GM12878 (cell line): ENCODE measurements at regions of chr15 and their contacts with region 1.

Region 1: DNA sequence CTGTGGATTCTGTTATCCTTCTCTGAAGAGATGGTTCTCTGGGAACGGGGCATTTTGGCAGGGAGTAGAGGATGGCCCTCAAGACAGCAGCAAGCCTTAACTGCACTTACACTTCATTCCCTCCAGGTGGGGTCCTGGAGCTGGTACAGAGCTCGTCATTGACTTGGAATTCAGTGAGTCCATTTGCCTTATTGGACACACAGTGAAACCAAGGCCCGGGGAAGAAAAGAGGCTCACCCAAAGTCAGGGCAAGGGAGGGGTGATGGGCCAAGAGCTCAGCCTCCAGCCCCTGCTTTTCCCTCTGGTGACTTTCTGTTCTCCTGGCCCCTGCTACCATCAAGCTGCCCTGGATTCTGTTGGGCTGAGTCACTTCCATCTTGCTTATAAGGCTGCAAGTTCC is 125.6 kb downstream of the ETFA start:
- DNase-seq: no peak
- ATAC-seq: peak; percentile 61
- H3K4me3 ChIP-seq: no peak overlapping the region
- H3K27ac ChIP-seq: no peak overlapping the region
- H3K4me1 ChIP-seq: peaks cover 18% of the 10 kb centered on the region
- H3K27me3 ChIP-seq: peaks cover 0 to 1% of the 10 kb centered on the region in 2 experiments; a peak in 2 of 4 replicates
- CTCF ChIP-seq: peak; percentile 56 to 70 (median 59)
- EP300 ChIP-seq: no peak
- POLR2A ChIP-seq: no peak
- RAD21 ChIP-seq: peak; percentile 51; the same call in 1 of the 2 replicates

Region 2: DNA sequence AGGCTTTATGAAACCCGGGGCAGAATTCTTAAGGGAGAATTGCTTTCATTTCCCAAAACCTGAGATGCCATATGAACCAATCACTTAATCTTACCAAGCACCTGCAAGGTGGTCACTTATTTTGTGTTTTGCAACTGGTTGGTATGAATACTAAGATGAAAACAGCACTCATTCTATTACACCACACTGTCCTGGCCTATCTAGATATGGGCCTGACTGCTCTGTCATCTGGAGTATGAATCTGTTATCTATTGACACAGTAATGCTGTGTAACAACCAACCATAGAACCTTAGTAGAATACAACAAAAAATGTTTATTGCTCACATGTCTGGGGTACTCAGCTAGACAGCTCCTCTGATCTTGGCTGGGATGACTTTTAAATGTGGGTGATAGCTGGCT is 51.2 kb before region 1 on chr15:
- CTCF ChIA-PET with region 1: no interaction called
- POLR2A ChIA-PET with region 1: no interaction called
- RAD21 ChIA-PET with region 1: no interaction called
- SMC1A ChIA-PET with region 1: no interaction called
- in situ Hi-C with region 1: no loop called
- intact Hi-C with region 1: no loop called
- DNase-seq: no peak
- ATAC-seq: no peak; the same call in 2 of the 3 replicates
- H3K4me3 ChIP-seq: no peak overlapping the region
- H3K27ac ChIP-seq: no peak overlapping the region
- H3K4me1 ChIP-seq: no peaks in the 10 kb centered on the region
- H3K27me3 ChIP-seq: no peaks in the 10 kb centered on the region
- CTCF ChIP-seq: no peak
- EP300 ChIP-seq: no peak
- POLR2A ChIP-seq: no peak
- RAD21 ChIP-seq: no peak

Region 3: GRCh38 chr15:76336254-76337058 is 150.7 kb after region 1 on chr15 and contains the start of gene ISL2:
- CTCF ChIA-PET with region 1: interaction called, 11 read pairs
- POLR2A ChIA-PET with region 1: no interaction called
- RAD21 ChIA-PET with region 1: interaction called, 4 read pairs
- SMC1A ChIA-PET with region 1: interaction called, 3 read pairs
- in situ Hi-C with region 1: no loop called
- intact Hi-C with region 1: loop called (anchors 5 kb)
- DNase-seq: peak; percentile 61
- ATAC-seq: peak; percentile 30
- H3K4me3 ChIP-seq: peak within 1 kb of the TSS; percentile 62
- H3K27ac ChIP-seq: peak within 1 kb of the TSS; percentile 51
- H3K4me1 ChIP-seq: peaks cover 25% of the 10 kb centered on the region
- H3K27me3 ChIP-seq: peaks cover 11 to 22% of the 10 kb centered on the region in 2 experiments
- CTCF ChIP-seq: no peak
- EP300 ChIP-seq: no peak
- POLR2A ChIP-seq: peak; percentile 88
- RAD21 ChIP-seq: no peak
- polyA plus RNA-seq, gene ISL2: not detected

Region 4: DNA sequence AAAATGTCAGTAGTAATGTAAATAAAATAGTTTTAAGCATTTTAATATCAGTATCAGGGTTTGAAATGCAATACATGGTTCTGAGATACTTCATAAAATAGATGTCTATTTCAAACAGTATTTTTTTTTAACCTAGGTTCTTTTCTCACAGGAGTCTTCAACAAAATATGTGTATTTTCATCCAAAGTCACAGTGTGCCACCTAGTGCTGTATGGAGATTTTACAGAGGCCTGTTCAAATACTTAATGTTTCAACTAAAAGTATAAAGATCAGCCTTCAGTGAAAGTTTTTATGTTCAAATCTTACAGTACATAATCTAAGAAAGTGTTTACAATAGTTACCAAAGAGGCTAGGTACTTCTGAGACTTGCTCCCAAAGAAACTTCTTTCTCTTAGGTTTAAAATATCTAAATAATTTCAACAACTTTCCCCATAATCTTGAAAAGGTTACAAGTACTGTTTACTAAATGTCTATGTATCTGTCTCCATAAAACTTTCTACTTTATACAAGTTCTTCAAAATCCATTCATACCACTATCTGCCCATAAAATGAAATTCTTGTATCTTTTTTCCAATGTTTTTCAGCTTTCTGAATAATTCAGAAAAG is 681.1 kb after region 1 on chr15:
- CTCF ChIA-PET with region 1: interaction called, 18 read pairs
- POLR2A ChIA-PET with region 1: no interaction called
- RAD21 ChIA-PET with region 1: interaction called, 14 read pairs
- SMC1A ChIA-PET with region 1: interaction called, 5 read pairs
- in situ Hi-C with region 1: loop called (anchors 5 kb)
- intact Hi-C with region 1: loop called (anchors 1 kb)
- DNase-seq: no peak
- ATAC-seq: peak; percentile 53; the same call in 2 of the 3 replicates
- H3K4me3 ChIP-seq: no peak overlapping the region
- H3K27ac ChIP-seq: no peak overlapping the region
- H3K4me1 ChIP-seq: peaks cover 5% of the 10 kb centered on the region; the same call in 1 of the 2 replicates
- H3K27me3 ChIP-seq: no peaks in the 10 kb centered on the region
- CTCF ChIP-seq: peak; percentile 43 to 51 (median 47); a peak in 5 of 6 replicates
- EP300 ChIP-seq: no peak
- POLR2A ChIP-seq: no peak
- RAD21 ChIP-seq: peak; percentile 82